ENCODE measurements at regions of chr13 and their contacts with region 1.

Region 1: DNA sequence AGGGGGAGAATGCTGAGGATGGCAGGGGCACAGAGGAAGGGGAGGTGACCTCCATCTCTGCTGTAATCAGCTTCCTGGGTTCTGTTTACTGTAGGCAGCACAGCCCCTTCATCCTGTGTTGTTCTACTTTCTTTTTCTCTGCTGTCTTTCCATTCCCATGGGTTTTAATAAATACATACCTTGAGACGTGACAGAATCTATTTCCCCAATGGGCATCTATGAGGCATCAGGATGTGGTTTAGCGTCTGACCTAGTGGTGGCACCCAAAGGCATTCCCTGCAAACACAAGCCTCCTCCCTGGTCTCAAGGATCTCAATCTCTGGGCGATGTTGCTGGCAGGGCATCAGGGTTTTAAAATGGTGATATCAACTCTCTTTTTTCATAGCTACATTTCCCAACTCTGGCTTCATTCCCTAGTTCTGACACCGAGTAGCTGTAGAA is 60.8 kb downstream of the ALOX5AP start:
- DNase-seq: no peak

Region 2: DNA sequence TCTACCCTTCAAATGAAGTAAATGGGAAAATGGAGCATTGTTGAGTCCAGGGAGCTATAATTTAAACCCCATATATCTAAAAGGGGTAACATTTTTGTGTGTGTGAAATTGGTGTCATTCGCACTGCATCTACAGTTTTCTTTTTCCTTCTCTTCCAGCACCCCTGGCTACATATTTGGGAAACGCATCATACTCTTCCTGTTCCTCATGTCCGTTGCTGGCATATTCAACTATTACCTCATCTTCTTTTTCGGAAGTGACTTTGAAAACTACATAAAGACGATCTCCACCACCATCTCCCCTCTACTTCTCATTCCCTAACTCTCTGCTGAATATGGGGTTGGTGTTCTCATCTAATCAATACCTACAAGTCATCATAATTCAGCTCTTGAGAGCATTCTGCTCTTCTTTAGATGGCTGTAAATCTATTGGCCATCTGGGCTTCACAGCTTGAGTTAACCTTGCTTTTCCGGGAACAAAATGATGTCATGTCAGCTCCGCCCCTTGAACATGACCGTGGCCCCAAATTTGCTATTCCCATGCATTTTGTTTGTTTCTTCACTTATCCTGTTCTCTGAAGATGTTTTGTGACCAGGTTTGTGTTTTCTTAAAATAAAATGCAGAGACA is 32.3 kb before region 1 on chr13:
- intact Hi-C with region 1: loop called in 1 of 2 experiments (anchors 5 kb)
- DNase-seq: no peak

Region 3: GRCh38 chr13:30779608-30780007 is 16.5 kb before region 1 on chr13:
- intact Hi-C with region 1: loop called in 1 of 2 experiments (anchors 1 kb)
- DNase-seq: no peak